Naive thymus-derived CD4-positive, alpha-beta T cell (primary cell): ENCODE measurements at regions of chr3 and their contacts with region 1.

Region 1: DNA sequence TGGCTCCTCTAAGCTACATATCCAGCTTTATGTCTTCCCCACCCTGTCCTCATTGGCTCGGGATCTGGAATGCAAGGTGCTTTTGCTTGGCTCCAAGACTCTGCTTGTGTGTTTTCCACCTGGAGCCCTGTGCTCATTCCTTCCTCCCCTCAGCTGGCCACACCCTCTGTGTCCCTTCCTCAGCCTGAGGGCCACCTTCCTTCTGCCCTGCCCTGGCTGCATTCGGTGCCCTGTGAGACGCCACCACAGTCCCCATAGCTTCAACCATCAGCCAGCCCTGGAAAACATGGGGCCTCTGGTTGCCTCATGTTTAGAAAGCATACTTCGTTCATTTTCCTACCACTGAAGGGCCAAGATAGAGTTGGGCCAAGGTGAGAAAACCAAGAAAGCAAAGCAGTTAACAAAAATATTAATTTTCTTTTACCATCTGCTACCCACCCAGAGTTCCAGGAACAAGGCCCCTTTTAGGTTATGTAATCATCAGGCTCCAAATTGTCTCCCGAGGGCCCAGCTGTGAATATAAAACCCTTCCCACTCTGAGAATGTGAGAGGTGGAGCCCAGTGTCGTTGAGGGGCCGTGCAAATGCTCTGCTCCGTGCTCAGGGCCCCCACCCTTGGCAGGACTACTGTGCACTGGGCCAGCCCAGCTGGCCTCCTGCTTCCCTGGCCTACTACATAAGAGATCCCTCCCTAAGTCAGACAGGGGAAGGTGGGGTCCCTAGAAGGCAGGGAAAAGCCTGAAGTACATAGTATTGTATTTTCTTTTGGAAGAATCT is 4.8 kb upstream of the CLEC3B start:
- DNase-seq: no peak
- ATAC-seq: no peak
- H3K4me3 ChIP-seq: no peak overlapping the region
- H3K4me3 Mint-ChIP-seq: peak overlapping the region in 4 of 10 donors; percentile 26 to 58 (median 52)
- H3K27ac ChIP-seq: peak overlapping the region; percentile 36
- H3K27ac Mint-ChIP-seq: peak overlapping the region in 7 of 9 donors; percentile 56 to 97 (median 87)
- H3K4me1 ChIP-seq: peaks cover 0 to 16% of the 10 kb centered on the region in 2 donors
- H3K4me1 Mint-ChIP-seq: peaks cover 15 to 46% (median 42%) of the 10 kb centered on the region in 7 donors
- H3K27me3 ChIP-seq: no peaks in the 10 kb centered on the region
- H3K27me3 Mint-ChIP-seq: peaks cover 0 to 3% (median 0%) of the 10 kb centered on the region in 5 donors

Region 2: GRCh38 chr3:44992555-44993470 is 28.5 kb before region 1 on chr3:
- CTCF ChIA-PET with region 1: interaction called, 3 read pairs
- POLR2A ChIA-PET with region 1: no interaction called
- intact Hi-C with region 1: loop called in 1 of 2 experiments (anchors 1 kb)
- DNase-seq: peak in 1 of 9 donors; percentile 20
- ATAC-seq: peak; percentile 73
- H3K4me3 ChIP-seq: no peak overlapping the region
- H3K4me3 Mint-ChIP-seq: peak overlapping the region in 3 of 10 donors; percentile 21 to 74 (median 40)
- H3K27ac ChIP-seq: no peak overlapping the region
- H3K27ac Mint-ChIP-seq: peak overlapping the region in 6 of 9 donors; percentile 53 to 76 (median 61)
- H3K4me1 ChIP-seq: peaks cover 0 to 30% of the 10 kb centered on the region in 2 donors
- H3K4me1 Mint-ChIP-seq: peaks cover 37 to 95% (median 91%) of the 10 kb centered on the region in 7 donors
- H3K27me3 ChIP-seq: no peaks in the 10 kb centered on the region
- H3K27me3 Mint-ChIP-seq: no peaks in the 10 kb centered on the region

Region 3: DNA sequence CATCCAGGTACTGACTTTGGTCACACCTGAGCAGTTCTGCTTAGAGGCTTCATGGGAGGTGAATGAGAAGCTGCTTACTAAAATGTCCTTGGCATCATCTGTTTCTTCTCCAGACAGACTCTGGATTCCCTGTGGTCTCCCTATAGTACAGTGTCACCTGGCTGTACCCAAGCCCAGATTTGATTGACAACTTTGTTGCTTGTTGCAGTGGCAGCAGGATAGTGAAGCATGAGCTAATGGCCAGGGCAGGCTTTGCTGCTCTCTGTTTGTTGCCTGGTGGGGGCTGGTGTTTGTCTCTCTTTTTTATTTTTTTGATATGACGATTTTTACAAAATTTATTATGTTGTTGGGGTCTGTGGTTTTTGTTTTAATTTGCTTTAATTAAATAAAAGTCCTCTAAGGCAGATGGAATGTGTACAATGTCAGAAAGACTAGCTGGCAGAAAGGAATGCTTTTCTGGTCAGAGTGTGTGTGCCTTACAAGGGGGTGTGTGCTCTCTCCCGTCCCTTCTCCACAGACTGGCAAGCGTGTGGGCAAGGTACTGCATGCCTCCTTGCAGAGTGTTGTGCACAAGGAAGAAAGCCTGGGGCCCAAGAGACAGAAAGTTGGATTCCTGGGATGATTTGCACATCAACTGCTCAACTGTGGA is 10.5 kb before region 1 on chr3:
- CTCF ChIA-PET with region 1: no interaction called
- POLR2A ChIA-PET with region 1: interaction called, 10 read pairs
- intact Hi-C with region 1: no loop called
- DNase-seq: no peak
- ATAC-seq: no peak
- H3K4me3 ChIP-seq: no peak overlapping the region
- H3K4me3 Mint-ChIP-seq: no peak overlapping the region
- H3K27ac ChIP-seq: no peak overlapping the region
- H3K27ac Mint-ChIP-seq: peak overlapping the region in 4 of 9 donors; percentile 36 to 83 (median 55)
- H3K4me1 ChIP-seq: peaks cover 3 to 13% of the 10 kb centered on the region in 2 donors
- H3K4me1 Mint-ChIP-seq: peaks cover 17 to 49% (median 25%) of the 10 kb centered on the region in 7 donors
- H3K27me3 ChIP-seq: no peaks in the 10 kb centered on the region
- H3K27me3 Mint-ChIP-seq: no peaks in the 10 kb centered on the region